ENCODE measurements at regions of chr16 and their contacts with region 1.

Region 1: DNA sequence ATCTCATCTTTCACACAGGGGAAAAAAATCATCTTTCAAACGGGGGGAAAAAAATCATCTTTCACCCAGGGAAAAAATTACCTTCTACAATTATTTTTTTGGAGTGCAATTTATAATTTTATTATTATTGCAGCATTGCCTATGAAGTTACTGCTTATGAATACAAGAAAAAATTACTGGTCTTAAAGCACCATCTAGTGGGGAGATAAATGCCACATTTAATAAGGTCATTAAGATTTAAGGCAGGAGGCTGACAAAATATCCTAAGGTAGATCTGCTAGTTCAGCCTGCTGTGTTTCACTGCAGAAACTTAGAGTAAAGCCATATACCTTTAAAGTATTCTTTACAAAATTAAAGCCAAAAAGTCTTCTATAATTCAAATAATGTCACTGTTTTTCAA is 13.7 kb downstream of the SHCBP1 start:
- DNase-seq: no peak
- ATAC-seq: no peak
- H3K4me3 Mint-ChIP-seq: no peak overlapping the region
- H3K27ac Mint-ChIP-seq: no peak overlapping the region
- H3K4me1 Mint-ChIP-seq: no peaks in the 10 kb centered on the region
- H3K27me3 Mint-ChIP-seq: no peaks in the 10 kb centered on the region

Region 2: DNA sequence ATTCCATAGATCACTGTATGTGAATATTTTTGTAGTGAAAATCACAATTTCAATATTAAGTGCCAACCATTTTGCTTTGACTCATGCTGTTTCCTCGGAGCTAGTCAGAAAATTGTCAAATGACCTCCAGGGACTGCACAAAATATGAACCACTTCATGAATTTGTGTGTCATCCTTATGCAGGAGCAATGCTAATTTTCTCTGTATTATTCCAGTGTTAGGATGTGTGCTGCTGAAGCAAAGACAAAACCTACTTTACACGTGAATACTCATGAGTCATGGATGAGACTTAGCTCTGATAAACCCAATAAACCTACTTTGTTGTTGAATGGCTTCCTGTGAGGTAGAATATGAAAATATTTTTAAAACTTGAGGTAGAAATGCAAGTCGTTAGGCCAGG is 51.6 kb before region 1 on chr16:
- CTCF ChIA-PET with region 1: interaction called, 11 read pairs
- POLR2A ChIA-PET with region 1: no interaction called
- DNase-seq: no peak
- ATAC-seq: no peak
- H3K4me3 Mint-ChIP-seq: no peak overlapping the region
- H3K27ac Mint-ChIP-seq: no peak overlapping the region
- H3K4me1 Mint-ChIP-seq: no peaks in the 10 kb centered on the region
- H3K27me3 Mint-ChIP-seq: peaks cover 10% of the 10 kb centered on the region

Region 3: DNA sequence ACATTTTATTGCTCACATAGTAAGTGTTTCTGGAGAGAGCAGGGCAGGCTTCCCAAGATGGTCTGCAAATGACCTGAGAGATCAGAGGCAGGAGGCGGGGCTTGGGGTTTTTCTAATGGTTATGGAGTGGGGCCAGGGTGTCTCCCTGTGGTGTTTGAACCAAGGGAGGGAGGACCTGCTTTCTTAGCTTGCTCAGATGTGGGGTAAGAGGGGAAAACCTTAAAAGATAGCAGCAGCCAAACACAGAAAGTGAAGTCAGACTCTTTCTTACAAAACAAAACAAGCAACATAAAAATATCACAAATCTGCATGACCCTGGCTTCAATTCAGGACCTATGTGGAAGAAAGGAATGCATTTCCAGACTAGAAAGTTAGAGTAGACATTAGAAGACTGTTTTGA is 388.9 kb after region 1 on chr16:
- CTCF ChIA-PET with region 1: no interaction called
- POLR2A ChIA-PET with region 1: no interaction called
- DNase-seq: peak; percentile 27
- ATAC-seq: peak; percentile 44
- H3K4me3 Mint-ChIP-seq: no peak overlapping the region
- H3K27ac Mint-ChIP-seq: no peak overlapping the region
- H3K4me1 Mint-ChIP-seq: peaks cover 16% of the 10 kb centered on the region
- H3K27me3 Mint-ChIP-seq: peaks cover 2% of the 10 kb centered on the region

Measured in activated CD8-positive, alpha-beta T cell treated with anti-CD3 and anti-CD28 coated beads, Interleukin-2, amount 10 ng/mL, durations not matched to agents 7 days and 5 days (primary cell).